ENCODE measurements at regions of chr2 and their contacts with region 1.

Region 1: GRCh38 chr2:26846328-26847306 is 1.3 kb upstream of the DPYSL5 start:
- DNase-seq: peak in 1 of 2 experiments; percentile 86
- H3K4me3 ChIP-seq: peak overlapping the region; percentile 54 to 91 (median 70); a peak in 7 of 8 replicates
- H3K27ac ChIP-seq: no peak overlapping the region
- H3K4me1 ChIP-seq: peaks cover 0 to 22% (median 8%) of the 10 kb centered on the region in 4 experiments; a peak in 4 of 7 replicates
- H3K27me3 ChIP-seq: peaks cover 30 to 61% (median 48%) of the 10 kb centered on the region in 4 experiments
- CTCF ChIP-seq: peak; percentile 48 to 96 (median 82)
- EP300 ChIP-seq: no peak
- POLR2A ChIP-seq: no peak
- RAD21 ChIP-seq: peak; percentile 89 to 94

Region 2: GRCh38 chr2:26587994-26588393 is 258.6 kb before region 1 on chr2:
- CTCF ChIA-PET with region 1: no interaction called
- POLR2A ChIA-PET with region 1: no interaction called
- DNase-seq: no peak
- H3K4me3 ChIP-seq: no peak overlapping the region
- H3K27ac ChIP-seq: no peak overlapping the region
- H3K4me1 ChIP-seq: no peaks in the 10 kb centered on the region
- H3K27me3 ChIP-seq: peaks cover 0 to 3% (median 0%) of the 10 kb centered on the region in 4 experiments; a peak in 1 of 7 replicates
- CTCF ChIP-seq: no peak
- EP300 ChIP-seq: no peak
- POLR2A ChIP-seq: no peak
- RAD21 ChIP-seq: no peak

Region 3: DNA sequence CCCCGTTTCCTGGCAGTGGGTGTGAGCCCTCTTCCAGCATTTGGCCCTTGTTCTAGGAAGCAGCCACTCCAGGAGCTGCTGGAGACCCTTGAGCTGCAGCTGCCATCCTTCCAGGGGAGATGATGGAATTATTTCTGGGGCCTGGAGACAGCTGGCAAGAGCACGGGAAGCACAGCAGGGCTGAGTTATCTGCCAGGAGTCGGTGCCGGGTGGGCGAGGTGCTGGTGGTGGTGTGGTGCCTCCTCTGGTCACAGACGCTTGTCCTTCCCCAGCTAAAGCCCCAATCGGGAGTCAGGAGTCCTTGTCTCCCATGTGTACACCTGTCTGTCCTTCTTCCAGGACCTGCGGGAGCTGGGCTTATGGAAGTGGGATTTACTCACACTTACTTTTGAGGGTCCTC is 37.3 kb after region 1 on chr2:
- CTCF ChIA-PET with region 1: interaction called, 11 read pairs
- POLR2A ChIA-PET with region 1: no interaction called
- DNase-seq: peak in 1 of 2 experiments; percentile 43
- H3K4me3 ChIP-seq: no peak overlapping the region
- H3K27ac ChIP-seq: no peak overlapping the region
- H3K4me1 ChIP-seq: peaks cover 0 to 3% (median 0%) of the 10 kb centered on the region in 4 experiments; a peak in 1 of 7 replicates
- H3K27me3 ChIP-seq: no peaks in the 10 kb centered on the region
- CTCF ChIP-seq: no peak
- EP300 ChIP-seq: no peak
- POLR2A ChIP-seq: no peak
- RAD21 ChIP-seq: no peak

Region 4: GRCh38 chr2:26917135-26917836 is 70.7 kb after region 1 on chr2:
- CTCF ChIA-PET with region 1: interaction called, 55 read pairs
- POLR2A ChIA-PET with region 1: interaction called, 6 read pairs
- DNase-seq: peak in 1 of 2 experiments; percentile 26
- H3K4me3 ChIP-seq: no peak overlapping the region
- H3K27ac ChIP-seq: no peak overlapping the region
- H3K4me1 ChIP-seq: peaks cover 10 to 21% (median 14%) of the 10 kb centered on the region in 4 experiments
- H3K27me3 ChIP-seq: no peaks in the 10 kb centered on the region; a peak in 1 of 7 replicates
- CTCF ChIP-seq: no peak
- EP300 ChIP-seq: no peak
- POLR2A ChIP-seq: no peak
- RAD21 ChIP-seq: no peak

Region 5: GRCh38 chr2:26942543-26943295 is 96.1 kb after region 1 on chr2:
- CTCF ChIA-PET with region 1: interaction called, 235 read pairs
- POLR2A ChIA-PET with region 1: interaction called, 10 read pairs
- DNase-seq: peak; percentile 69 to 91
- H3K4me3 ChIP-seq: peak overlapping the region; percentile 37 to 59 (median 40); a peak in 7 of 8 replicates
- H3K27ac ChIP-seq: no peak overlapping the region
- H3K4me1 ChIP-seq: peaks cover 2 to 23% (median 7%) of the 10 kb centered on the region in 4 experiments
- H3K27me3 ChIP-seq: peaks cover 0 to 3% (median 0%) of the 10 kb centered on the region in 4 experiments; a peak in 1 of 7 replicates
- CTCF ChIP-seq: peak; percentile 85 to 90 (median 85)
- EP300 ChIP-seq: no peak
- POLR2A ChIP-seq: no peak
- RAD21 ChIP-seq: peak; percentile 82 to 89

Region 6: GRCh38 chr2:26976237-26976636 is 129.6 kb after region 1 on chr2:
- CTCF ChIA-PET with region 1: interaction called, 11 read pairs
- POLR2A ChIA-PET with region 1: no interaction called
- DNase-seq: no peak
- H3K4me3 ChIP-seq: no peak overlapping the region
- H3K27ac ChIP-seq: no peak overlapping the region
- H3K4me1 ChIP-seq: peaks cover 0 to 11% (median 4%) of the 10 kb centered on the region in 4 experiments; a peak in 6 of 7 replicates
- H3K27me3 ChIP-seq: peaks cover 0 to 7% (median 0%) of the 10 kb centered on the region in 4 experiments; a peak in 3 of 7 replicates
- CTCF ChIP-seq: no peak
- EP300 ChIP-seq: no peak
- POLR2A ChIP-seq: no peak
- RAD21 ChIP-seq: no peak